ENCODE measurements at regions of chr1 and their contacts with region 1.

Region 1: DNA sequence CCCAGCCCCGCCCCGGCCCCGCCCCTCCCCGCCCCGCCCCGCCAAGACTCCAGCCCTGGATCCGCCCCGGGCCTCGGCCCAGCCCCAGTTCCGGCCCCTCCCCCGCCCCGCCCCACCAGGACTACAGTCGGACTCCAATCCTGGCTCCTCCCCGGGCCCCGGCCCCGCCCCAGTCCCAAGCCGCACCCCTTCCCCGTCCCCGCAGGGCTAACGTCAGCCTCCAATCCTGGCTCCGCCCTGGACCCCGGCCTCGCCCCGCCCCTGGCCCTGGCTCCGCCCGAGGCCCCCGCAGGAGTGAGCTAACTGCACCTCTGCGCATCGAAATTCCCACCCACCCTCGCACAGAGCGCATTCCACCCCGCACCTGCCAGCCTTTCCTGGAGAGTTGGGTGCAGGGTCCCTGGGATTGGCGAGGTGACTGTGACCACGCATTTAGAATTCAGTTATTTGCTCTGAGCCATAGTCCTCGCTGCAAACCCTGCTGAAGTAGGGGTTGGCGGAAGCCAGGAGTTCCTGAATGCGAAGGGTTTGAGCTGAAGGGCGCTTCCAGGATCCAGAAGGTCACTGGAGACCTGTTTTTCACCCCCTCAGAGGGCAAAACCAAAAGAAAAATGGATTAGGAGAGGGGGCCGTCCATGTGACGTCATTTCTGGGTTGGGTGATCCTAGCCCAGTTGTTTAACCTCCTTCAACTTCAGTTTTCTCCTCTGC is 588 bp upstream of the IGSF8 start:
- DNase-seq: peak; percentile 99
- H3K4me3 Mint-ChIP-seq: peak overlapping the region; percentile 83
- H3K27ac Mint-ChIP-seq: peak overlapping the region; percentile 74
- H3K4me1 Mint-ChIP-seq: peaks cover 35% of the 10 kb centered on the region
- H3K27me3 Mint-ChIP-seq: no peaks in the 10 kb centered on the region

Region 2: DNA sequence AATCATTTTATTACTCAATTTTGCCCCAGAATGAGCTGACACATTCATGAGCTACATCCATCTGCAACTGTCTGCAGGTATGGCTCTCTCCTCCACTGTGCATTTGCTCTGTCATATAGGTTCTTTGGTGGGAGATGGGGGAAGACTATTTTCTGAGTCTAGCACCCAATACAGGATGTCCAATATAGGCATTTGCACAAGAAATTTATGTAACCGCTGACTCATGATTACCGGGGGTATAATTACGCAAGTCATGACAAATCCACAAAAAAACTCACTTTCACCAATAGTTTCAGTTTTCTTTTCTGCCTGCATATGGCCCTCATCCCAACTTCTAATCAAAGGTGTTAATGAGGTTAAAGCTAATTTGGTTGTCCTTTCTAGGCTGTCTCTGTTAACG is 219.0 kb before region 1 on chr1:
- intact Hi-C with region 1: no loop called
- DNase-seq: no peak
- H3K4me3 Mint-ChIP-seq: no peak overlapping the region
- H3K27ac Mint-ChIP-seq: no peak overlapping the region
- H3K4me1 Mint-ChIP-seq: no peaks in the 10 kb centered on the region
- H3K27me3 Mint-ChIP-seq: peaks cover 3% of the 10 kb centered on the region

Region 3: DNA sequence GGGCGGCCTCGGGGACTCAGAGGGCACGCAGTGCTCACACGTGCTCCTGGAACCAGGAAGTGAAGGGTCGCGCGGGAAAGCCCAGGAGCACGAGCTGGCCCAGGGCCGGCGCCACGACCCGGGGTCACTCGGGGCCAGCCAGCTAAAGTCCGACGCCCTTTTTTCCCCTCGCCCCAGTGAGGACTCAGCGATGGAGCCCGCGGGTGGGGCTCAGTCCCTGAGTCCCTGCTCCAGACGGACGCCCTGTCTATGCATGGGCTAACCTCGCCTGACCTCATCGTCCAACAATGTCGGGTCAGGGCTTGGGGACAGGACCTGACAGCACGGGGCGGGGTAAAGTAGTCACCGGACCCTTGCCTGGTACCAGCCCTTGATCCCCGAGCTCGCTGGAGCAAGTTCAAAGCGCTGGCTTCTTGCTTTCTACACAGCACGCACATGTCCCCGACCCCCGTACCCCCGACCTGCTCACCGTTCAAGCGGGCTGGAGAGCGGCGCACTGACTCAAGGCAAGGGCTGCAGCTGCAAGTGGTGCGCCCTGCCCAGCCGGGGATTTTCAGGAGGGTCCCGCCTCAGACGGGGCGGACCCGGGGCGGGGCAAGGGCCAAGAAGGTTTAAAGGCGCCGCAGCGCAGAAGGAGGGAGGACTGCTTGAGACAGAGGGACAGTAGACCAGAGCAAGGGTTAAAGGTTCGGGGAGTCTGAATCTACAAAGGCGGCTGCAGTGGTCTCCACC is 173.9 kb before region 1 on chr1 and contains the start of gene TAGLN2:
- intact Hi-C with region 1: loop called (anchors 1 kb)
- DNase-seq: peak; percentile 98
- H3K4me3 Mint-ChIP-seq: peak within 1 kb of the TSS; percentile 92
- H3K27ac Mint-ChIP-seq: peak within 1 kb of the TSS; percentile 98
- H3K4me1 Mint-ChIP-seq: peaks cover 45% of the 10 kb centered on the region
- H3K27me3 Mint-ChIP-seq: no peaks in the 10 kb centered on the region
- total RNA-seq, gene TAGLN2: 488 and 517 TPM in 2 replicates

Region 4: GRCh38 chr1:160205242-160206035 is 106.4 kb after region 1 on chr1 and contains the start of gene PEA15:
- intact Hi-C with region 1: loop called (anchors 2 kb)
- DNase-seq: peak; percentile 92
- H3K4me3 Mint-ChIP-seq: peak within 1 kb of the TSS; percentile 91
- H3K27ac Mint-ChIP-seq: peak within 1 kb of the TSS; percentile 91
- H3K4me1 Mint-ChIP-seq: peaks cover 40% of the 10 kb centered on the region
- H3K27me3 Mint-ChIP-seq: no peaks in the 10 kb centered on the region
- total RNA-seq, gene PEA15: 70.2 and 70.9 TPM in 2 replicates

Region 5: GRCh38 chr1:160261893-160262794 is 163.1 kb after region 1 on chr1 and contains the start of gene DCAF8:
- intact Hi-C with region 1: loop called (anchors 2 kb)
- DNase-seq: peak; percentile 100
- H3K4me3 Mint-ChIP-seq: peak within 1 kb of the TSS; percentile 99
- H3K27ac Mint-ChIP-seq: peak within 1 kb of the TSS; percentile 99
- H3K4me1 Mint-ChIP-seq: peaks cover 31% of the 10 kb centered on the region
- H3K27me3 Mint-ChIP-seq: no peaks in the 10 kb centered on the region
- total RNA-seq, gene DCAF8: 117 and 121 TPM in 2 replicates

Region 6: GRCh38 chr1:160291248-160292220 is 192.5 kb after region 1 on chr1:
- intact Hi-C with region 1: loop called (anchors 1 kb)
- DNase-seq: peak; percentile 90
- H3K4me3 Mint-ChIP-seq: no peak overlapping the region
- H3K27ac Mint-ChIP-seq: peak overlapping the region; percentile 73
- H3K4me1 Mint-ChIP-seq: peaks cover 2% of the 10 kb centered on the region
- H3K27me3 Mint-ChIP-seq: no peaks in the 10 kb centered on the region

Measured in activated CD4-positive, alpha-beta T cell treated with anti-CD3 and anti-CD28 coated beads, Interleukin-2, amount 10 ng/mL, durations not matched to agents 24 days and 14 days (primary cell).